Activated CD4-positive, alpha-beta T cell treated with anti-CD3 and anti-CD28 coated beads, Interleukin-2, amount 10 ng/mL, durations not matched to agents 24 days and 14 days (primary cell): ENCODE measurements at regions of chr17 and their contacts with region 1.

Region 1: DNA sequence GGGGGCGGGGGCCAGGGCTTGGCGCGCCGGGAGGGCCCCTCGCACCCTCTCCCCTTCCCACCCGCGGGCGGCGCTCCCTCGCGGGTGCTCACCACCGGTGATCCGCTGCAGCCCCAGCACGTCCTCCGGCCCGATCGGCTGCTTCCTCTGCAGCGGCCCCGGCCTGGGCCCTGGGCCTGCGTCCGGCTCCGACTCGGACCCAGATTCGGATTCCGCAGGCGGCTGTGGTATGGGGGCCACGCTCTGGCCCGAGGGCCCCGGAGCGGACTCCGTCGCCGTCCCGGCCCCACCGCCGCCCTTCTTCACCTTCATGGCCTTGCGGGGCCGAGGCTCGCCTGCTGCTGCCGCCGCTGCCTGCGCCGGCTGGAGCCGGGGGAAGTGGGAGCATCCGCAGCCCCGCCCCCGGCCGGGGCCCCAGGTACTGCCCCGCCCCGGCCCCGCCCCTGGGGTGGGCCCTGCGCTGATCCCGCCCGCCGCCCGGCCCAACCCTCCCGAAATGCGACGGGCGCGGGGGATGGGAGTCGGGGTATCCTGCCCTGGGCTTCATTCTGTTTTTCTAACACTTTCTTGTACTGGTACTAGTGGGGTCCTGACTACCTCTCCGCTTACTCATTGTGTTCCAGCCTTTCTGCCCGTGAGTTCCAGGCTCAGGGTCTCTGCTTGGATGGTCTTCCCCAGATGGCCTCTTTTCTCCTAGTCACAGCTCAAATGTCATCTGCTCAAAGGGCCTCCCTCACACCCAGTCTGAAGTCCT is at the start of gene UNC119:
- DNase-seq: peak; percentile 94
- H3K4me3 Mint-ChIP-seq: peak within 1 kb of the TSS; percentile 96
- H3K27ac Mint-ChIP-seq: peak within 1 kb of the TSS; percentile 90
- H3K4me1 Mint-ChIP-seq: peaks cover 53% of the 10 kb centered on the region
- H3K27me3 Mint-ChIP-seq: no peaks in the 10 kb centered on the region
- total RNA-seq, gene UNC119: 59.8 and 60.2 TPM in 2 replicates

Region 2: DNA sequence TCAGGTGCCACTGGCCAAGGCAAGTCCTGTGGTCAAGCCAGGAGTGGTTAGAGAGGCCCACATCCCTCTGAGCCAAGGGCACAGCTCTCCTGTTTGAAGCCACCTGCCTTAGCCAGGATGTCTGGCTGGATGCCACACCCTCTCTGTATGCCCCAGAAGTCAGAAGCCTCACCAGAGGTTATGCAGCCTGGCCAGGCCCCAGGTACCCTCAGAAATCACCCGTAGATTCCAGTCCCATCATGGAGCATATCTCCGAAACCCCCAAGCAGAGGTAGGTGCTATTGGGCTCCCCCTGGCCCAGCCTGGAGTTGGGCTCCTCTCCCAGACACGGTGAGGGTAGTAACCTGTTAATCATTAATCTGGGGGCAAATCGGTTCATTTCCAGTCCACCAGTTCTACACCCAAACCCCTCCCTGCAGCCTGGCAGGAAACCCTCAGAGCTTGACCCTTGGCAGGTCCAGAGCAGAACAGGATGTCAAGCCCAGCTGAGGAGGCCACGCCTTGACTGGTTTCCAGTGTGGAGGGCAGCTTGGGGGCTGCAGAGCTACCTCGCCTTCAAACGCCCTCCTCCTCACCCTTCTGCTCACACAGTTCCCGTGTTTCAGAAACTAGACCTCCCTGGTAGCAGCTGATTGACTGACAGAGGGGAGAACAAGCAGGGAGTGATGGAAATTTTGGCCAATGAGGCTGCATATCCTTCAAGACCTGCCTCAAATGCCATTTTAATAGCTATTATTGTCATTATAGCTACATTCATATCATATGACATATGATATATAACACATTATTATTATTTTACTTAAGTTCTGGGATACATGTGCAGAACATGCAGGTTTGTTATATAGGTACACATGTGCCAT is 293.8 kb before region 1 on chr17:
- intact Hi-C with region 1: no loop called
- DNase-seq: no peak
- H3K4me3 Mint-ChIP-seq: no peak overlapping the region
- H3K27ac Mint-ChIP-seq: no peak overlapping the region
- H3K4me1 Mint-ChIP-seq: no peaks in the 10 kb centered on the region
- H3K27me3 Mint-ChIP-seq: peaks cover 9% of the 10 kb centered on the region

Region 3: GRCh38 chr17:28416703-28417311 is 135.6 kb before region 1 on chr17:
- intact Hi-C with region 1: loop called (anchors 5 kb)
- DNase-seq: peak; percentile 88
- H3K4me3 Mint-ChIP-seq: no peak overlapping the region
- H3K27ac Mint-ChIP-seq: no peak overlapping the region
- H3K4me1 Mint-ChIP-seq: peaks cover 2% of the 10 kb centered on the region
- H3K27me3 Mint-ChIP-seq: peaks cover 16% of the 10 kb centered on the region

Region 4: DNA sequence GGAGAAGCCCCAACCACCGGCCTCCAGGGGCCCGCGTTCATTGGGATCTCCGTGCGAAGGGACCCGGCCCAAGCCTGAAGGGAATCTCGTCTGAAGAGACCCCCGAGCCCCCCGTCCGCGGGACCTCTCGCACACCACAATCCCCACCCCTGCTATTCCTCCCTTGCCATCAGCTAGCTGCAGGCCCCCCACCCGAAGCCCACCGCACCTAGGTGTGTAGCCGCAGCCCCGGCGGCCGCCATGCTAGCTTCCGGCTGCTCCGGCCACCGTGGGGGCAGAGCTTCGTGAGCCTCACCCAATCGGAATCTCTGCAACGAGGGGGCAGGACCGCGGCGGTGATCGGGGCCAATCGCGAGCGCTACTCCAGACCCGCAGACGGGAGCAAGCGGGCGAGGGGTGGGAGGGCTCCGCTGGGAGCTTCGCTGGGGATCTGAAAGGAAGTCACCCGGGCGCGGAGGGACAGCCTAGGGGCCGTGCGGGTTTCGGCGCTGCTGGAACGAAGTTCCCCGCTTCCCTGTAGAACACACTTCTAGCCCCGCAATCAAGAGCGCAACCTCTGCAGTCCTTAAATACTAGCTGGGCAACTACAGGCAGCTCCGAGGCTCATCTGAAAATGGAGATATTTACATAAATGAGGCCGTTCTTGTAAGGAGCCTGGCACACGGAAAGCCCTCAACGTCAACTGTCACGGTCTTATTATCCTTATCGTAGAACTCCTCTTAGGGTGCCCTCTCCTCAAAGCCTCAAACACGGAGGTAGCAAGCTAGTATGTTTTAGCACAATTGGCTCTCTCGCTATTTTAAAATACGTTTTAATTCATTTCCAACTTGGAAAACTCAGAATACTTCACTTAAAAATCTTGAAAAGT is 19.1 kb after region 1 on chr17 and contains the start of gene PIGS:
- intact Hi-C with region 1: loop called (anchors 1 kb)
- DNase-seq: peak; percentile 98
- H3K4me3 Mint-ChIP-seq: peak within 1 kb of the TSS; percentile 92
- H3K27ac Mint-ChIP-seq: peak within 1 kb of the TSS; percentile 94
- H3K4me1 Mint-ChIP-seq: peaks cover 53% of the 10 kb centered on the region
- H3K27me3 Mint-ChIP-seq: no peaks in the 10 kb centered on the region
- total RNA-seq, gene PIGS: 65.8 and 70.9 TPM in 2 replicates